ENCODE measurements at regions of chr16 and their contacts with region 1.

Region 1: DNA sequence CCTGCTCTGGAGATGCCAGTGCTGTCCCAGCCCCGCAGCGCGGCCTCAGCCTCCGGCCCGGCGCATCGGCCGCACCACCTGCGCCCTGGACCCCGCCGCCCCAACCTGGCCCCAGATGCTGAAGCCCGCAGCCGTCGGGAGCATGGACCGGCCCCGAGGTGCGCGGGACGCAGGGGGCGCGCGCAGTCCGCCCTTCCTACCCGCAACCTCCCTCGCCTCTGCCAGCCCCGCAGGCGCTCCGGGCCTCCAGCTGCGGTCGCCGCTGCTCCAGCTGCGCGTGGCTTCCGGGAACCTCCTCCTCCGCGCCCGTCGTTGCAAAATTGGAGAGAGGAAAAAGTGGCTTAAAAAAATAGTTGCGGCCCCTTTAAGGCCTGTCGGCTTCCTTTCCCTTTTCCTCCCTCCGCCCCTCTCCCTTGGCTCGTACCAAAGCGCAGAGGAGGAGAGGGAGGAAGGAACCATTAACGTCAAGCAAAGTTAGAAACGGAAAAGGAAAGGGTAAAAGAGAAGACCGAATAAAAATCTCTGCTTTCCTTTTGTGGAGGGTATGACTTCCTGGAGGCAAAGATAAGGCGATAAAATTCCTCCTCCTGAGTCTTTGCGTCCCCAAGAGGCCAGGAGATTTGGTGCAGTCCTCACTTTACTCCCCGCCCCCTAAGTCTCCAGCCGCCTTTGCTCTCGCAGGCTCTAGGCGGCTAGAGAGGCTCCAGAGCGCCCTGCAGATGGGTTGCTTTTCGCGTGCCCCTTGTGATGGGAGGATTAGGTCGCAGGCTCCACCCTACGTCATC is at the start of gene CDIPT:
- DNase-seq: peak; percentile 95 to 96 (median 95)
- H3K4me3 ChIP-seq: peak within 1 kb of the TSS; percentile 69 to 83
- H3K4me3 Mint-ChIP-seq: peak within 1 kb of the TSS; percentile 84 to 99 (median 96)
- H3K27ac ChIP-seq: peak within 1 kb of the TSS; percentile 89
- H3K27ac Mint-ChIP-seq: peak within 1 kb of the TSS; percentile 87 to 100 (median 98)
- H3K4me1 ChIP-seq: peaks cover 22% of the 10 kb centered on the region
- H3K4me1 Mint-ChIP-seq: peaks cover 4 to 34% (median 19%) of the 10 kb centered on the region in 4 donors
- H3K27me3 ChIP-seq: no peaks in the 10 kb centered on the region
- H3K27me3 Mint-ChIP-seq: no peaks in the 10 kb centered on the region
- total RNA-seq, gene CDIPT: 76.2 to 79.8 TPM

Region 2: DNA sequence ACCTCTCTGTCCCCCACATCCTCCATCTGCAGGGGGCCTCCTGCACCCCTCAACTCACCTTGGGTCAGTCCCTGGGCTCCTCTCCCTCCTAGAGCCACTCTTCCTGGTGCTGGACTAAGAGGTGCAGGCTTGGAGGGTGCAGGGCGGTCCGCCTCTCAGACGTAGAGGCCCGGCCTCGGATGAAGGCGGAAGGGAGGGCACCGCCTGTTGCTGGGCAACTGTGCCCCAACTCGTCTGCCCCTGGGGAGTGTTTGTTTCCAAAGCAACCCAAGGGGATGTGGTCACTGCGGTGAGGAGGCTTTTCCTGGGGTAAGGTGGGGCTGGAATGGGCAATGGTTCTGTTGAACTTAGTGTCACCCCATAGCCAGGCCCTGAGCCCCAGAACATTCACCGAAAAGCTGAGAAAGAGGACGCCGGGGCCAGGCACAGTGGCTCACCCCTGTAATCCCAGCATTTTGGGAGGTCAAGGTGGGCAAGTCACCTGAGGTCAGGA is 117.2 kb before region 1 on chr16 and contains the start of gene C16orf54:
- CTCF ChIA-PET with region 1: no interaction called
- POLR2A ChIA-PET with region 1: no interaction called
- intact Hi-C with region 1: no loop called
- DNase-seq: peak; percentile 98 to 99 (median 98)
- H3K4me3 ChIP-seq: peak within 1 kb of the TSS; percentile 67 to 93
- H3K4me3 Mint-ChIP-seq: peak within 1 kb of the TSS; percentile 96 to 100 (median 99)
- H3K27ac ChIP-seq: peak within 1 kb of the TSS; percentile 94
- H3K27ac Mint-ChIP-seq: peak within 1 kb of the TSS; percentile 98 to 100 (median 100)
- H3K4me1 ChIP-seq: peaks cover 78% of the 10 kb centered on the region
- H3K4me1 Mint-ChIP-seq: peaks cover 39 to 79% (median 54%) of the 10 kb centered on the region in 4 donors
- H3K27me3 ChIP-seq: no peaks in the 10 kb centered on the region
- H3K27me3 Mint-ChIP-seq: peaks cover 0 to 2% of the 10 kb centered on the region in 2 donors
- total RNA-seq, gene C16orf54: 139 to 143 TPM

Region 3: GRCh38 chr16:29815793-29816693 is 47.0 kb before region 1 on chr16 and contains the start of gene PAGR1:
- CTCF ChIA-PET with region 1: interaction called, 3 read pairs
- POLR2A ChIA-PET with region 1: interaction called, 18 read pairs
- intact Hi-C with region 1: loop called (anchors 1 kb)
- DNase-seq: peak; percentile 99 to 100 (median 99)
- H3K4me3 ChIP-seq: peak within 1 kb of the TSS; percentile 91 to 95
- H3K4me3 Mint-ChIP-seq: peak within 1 kb of the TSS; percentile 95 to 99 (median 98)
- H3K27ac ChIP-seq: peak within 1 kb of the TSS; percentile 77
- H3K27ac Mint-ChIP-seq: peak within 1 kb of the TSS; percentile 94 to 100 (median 98)
- H3K4me1 ChIP-seq: peaks cover 66% of the 10 kb centered on the region
- H3K4me1 Mint-ChIP-seq: peaks cover 30 to 87% (median 56%) of the 10 kb centered on the region in 4 donors
- H3K27me3 ChIP-seq: no peaks in the 10 kb centered on the region
- H3K27me3 Mint-ChIP-seq: peaks cover 0 to 2% of the 10 kb centered on the region in 2 donors
- total RNA-seq, gene PAGR1: 43.7 to 44.9 TPM

Region 4: DNA sequence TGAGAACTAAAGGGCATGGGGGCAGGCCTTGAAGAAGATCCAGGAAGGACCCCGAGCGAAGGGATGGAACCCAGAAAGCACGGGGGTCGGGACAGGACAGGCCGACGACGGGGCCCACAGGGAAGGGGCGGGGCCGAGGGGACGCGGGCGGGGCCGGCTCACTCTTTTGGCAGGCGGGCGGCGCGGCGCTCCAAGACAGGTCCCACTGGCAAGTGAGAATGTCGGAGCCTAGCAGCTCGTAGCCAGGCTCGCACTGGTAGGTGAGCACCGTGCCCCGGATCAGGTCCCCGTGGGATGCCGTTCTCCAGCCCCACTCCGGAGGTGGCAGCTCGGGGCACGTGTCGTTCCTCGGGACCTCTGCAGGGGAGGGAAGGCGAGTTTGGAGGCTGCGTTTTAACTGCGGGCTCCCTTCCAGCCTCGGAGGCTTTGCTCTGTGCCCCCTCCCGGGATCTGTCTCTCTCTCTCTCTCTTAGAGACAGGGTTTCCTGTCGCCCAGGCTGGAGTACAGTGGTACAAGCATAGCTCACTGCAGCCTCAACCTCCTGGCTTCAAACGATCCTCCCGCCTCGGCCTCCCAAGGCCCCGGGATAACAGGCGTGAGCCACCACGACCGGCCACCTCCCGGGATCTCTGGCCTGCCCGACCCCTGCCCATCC is 13.6 kb after region 1 on chr16:
- CTCF ChIA-PET with region 1: interaction called, 3 read pairs
- POLR2A ChIA-PET with region 1: interaction called, 3 read pairs
- intact Hi-C with region 1: loop called (anchors 1 kb)
- DNase-seq: peak in 2 of 5 donors; percentile 12 to 14
- H3K4me3 ChIP-seq: peak overlapping the region in 1 of 2 donors; percentile 38
- H3K4me3 Mint-ChIP-seq: peak overlapping the region; percentile 38 to 88 (median 80)
- H3K27ac ChIP-seq: no peak overlapping the region
- H3K27ac Mint-ChIP-seq: peak overlapping the region in 2 of 7 donors; percentile 35 to 68
- H3K4me1 ChIP-seq: peaks cover 14% of the 10 kb centered on the region
- H3K4me1 Mint-ChIP-seq: peaks cover 3 to 21% (median 14%) of the 10 kb centered on the region in 4 donors
- H3K27me3 ChIP-seq: peaks cover 8% of the 10 kb centered on the region
- H3K27me3 Mint-ChIP-seq: peaks cover 12 to 26% of the 10 kb centered on the region in 2 donors

Region 5: DNA sequence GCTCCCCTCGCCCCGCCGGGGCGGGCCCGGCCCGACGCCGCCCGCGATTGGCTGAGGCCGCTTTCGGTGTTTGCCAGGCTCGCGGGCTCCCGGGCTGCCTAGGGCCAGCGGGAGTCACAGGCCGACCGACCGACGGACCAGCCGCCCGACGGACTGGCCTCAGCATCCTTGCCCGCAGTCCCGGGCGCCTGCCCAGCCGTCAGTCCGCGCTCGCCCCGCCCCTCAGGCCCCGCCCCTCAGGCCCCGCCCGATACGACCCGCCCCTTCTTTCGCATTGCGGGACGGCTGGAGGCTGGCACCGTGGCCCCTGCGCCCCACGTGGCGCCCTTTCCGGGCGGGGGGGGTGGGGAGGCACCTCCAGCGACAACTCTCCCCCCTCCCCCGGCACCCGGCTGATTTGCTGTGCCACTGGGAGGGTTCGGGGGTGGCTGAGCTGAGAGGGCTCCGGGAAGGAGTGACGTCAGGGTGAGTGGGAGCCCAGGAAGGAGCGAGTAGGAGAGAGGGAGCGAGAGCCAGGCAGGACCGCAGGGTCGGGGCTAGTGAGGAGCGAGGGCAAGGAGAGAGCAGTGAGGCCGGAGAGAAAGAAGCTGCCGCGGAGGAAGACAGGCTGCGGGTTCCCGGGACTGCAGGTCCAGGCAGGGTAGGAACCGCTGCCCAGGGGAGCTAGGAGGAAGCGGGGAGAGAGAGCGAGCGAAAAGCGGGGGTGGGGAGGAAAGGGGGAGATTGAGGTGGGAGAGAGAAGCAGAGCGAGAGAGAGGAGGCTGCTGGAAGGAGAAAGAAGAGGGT is 37.2 kb after region 1 on chr16 and contains the start of gene ASPHD1:
- CTCF ChIA-PET with region 1: no interaction called
- POLR2A ChIA-PET with region 1: interaction called, 5 read pairs
- intact Hi-C with region 1: loop called (anchors 1 kb)
- DNase-seq: peak; percentile 74 to 88 (median 80)
- H3K4me3 ChIP-seq: peak within 1 kb of the TSS in 1 of 2 donors; percentile 45
- H3K4me3 Mint-ChIP-seq: peak within 1 kb of the TSS; percentile 47 to 83 (median 72)
- H3K27ac ChIP-seq: no peak within 1 kb of the TSS
- H3K27ac Mint-ChIP-seq: peak within 1 kb of the TSS in 3 of 7 donors; percentile 30 to 41 (median 30)
- H3K4me1 ChIP-seq: peaks cover 15% of the 10 kb centered on the region
- H3K4me1 Mint-ChIP-seq: peaks cover 0 to 5% (median 3%) of the 10 kb centered on the region in 4 donors
- H3K27me3 ChIP-seq: peaks cover 10% of the 10 kb centered on the region
- H3K27me3 Mint-ChIP-seq: peaks cover 18 to 24% of the 10 kb centered on the region in 2 donors
- total RNA-seq, gene ASPHD1: not detected

Region 6: GRCh38 chr16:29926005-29926710 is 63.1 kb after region 1 on chr16 and contains the start of gene KCTD13:
- CTCF ChIA-PET with region 1: no interaction called
- POLR2A ChIA-PET with region 1: interaction called, 6 read pairs
- intact Hi-C with region 1: loop called (anchors 5 kb)
- DNase-seq: peak; percentile 83 to 97 (median 90)
- H3K4me3 ChIP-seq: peak within 1 kb of the TSS; percentile 89 to 95
- H3K4me3 Mint-ChIP-seq: peak within 1 kb of the TSS; percentile 88 to 96 (median 94)
- H3K27ac ChIP-seq: peak within 1 kb of the TSS; percentile 77
- H3K27ac Mint-ChIP-seq: peak within 1 kb of the TSS; percentile 88 to 98 (median 97)
- H3K4me1 ChIP-seq: peaks cover 32% of the 10 kb centered on the region
- H3K4me1 Mint-ChIP-seq: peaks cover 22 to 53% (median 30%) of the 10 kb centered on the region in 4 donors
- H3K27me3 ChIP-seq: no peaks in the 10 kb centered on the region
- H3K27me3 Mint-ChIP-seq: no peaks in the 10 kb centered on the region
- total RNA-seq, gene KCTD13: 85.7 to 87.3 TPM

Region 7: GRCh38 chr16:29973384-29974246 is 110.5 kb after region 1 on chr16 and contains the start of gene TAOK2:
- CTCF ChIA-PET with region 1: interaction called, 4 read pairs
- POLR2A ChIA-PET with region 1: interaction called, 4 read pairs
- intact Hi-C with region 1: loop called (anchors 1 kb)
- DNase-seq: peak; percentile 92 to 94 (median 92)
- H3K4me3 ChIP-seq: peak within 1 kb of the TSS; percentile 74 to 87
- H3K4me3 Mint-ChIP-seq: peak within 1 kb of the TSS; percentile 82 to 97 (median 93)
- H3K27ac ChIP-seq: peak within 1 kb of the TSS; percentile 86
- H3K27ac Mint-ChIP-seq: peak within 1 kb of the TSS; percentile 77 to 97 (median 96)
- H3K4me1 ChIP-seq: peaks cover 36% of the 10 kb centered on the region
- H3K4me1 Mint-ChIP-seq: peaks cover 20 to 49% (median 34%) of the 10 kb centered on the region in 4 donors
- H3K27me3 ChIP-seq: no peaks in the 10 kb centered on the region
- H3K27me3 Mint-ChIP-seq: no peaks in the 10 kb centered on the region
- total RNA-seq, gene TAOK2: 53.8 to 56.0 TPM

Region 8: DNA sequence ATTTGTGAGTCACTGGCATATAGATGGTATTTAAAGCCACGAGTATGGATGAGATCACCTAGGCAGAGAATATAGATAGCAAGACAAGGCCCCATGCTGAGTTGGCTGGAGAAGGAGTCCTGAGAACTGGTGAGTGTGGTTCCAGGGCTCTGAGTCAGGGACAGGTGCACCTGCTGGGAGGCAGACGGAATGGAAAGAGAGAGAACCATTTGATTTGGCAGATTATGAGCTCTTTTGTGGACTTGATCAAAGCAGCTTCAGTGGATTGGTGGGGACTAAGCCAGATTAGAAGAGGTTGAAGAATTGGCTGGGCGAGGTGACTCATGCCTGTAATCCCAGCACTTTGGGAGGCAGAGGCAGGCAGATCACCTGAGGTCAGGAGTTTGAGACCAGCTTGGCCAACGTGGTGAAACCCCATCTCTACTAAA is 155.7 kb after region 1 on chr16:
- CTCF ChIA-PET with region 1: no interaction called
- POLR2A ChIA-PET with region 1: interaction called, 3 read pairs
- intact Hi-C with region 1: loop called (anchors 1 kb)
- DNase-seq: no peak
- H3K4me3 ChIP-seq: no peak overlapping the region
- H3K4me3 Mint-ChIP-seq: peak overlapping the region in 2 of 8 donors; percentile 1 to 56
- H3K27ac ChIP-seq: no peak overlapping the region
- H3K27ac Mint-ChIP-seq: peak overlapping the region in 1 of 7 donors; percentile 28
- H3K4me1 ChIP-seq: peaks cover 9% of the 10 kb centered on the region
- H3K4me1 Mint-ChIP-seq: peaks cover 4 to 13% (median 7%) of the 10 kb centered on the region in 4 donors
- H3K27me3 ChIP-seq: no peaks in the 10 kb centered on the region
- H3K27me3 Mint-ChIP-seq: no peaks in the 10 kb centered on the region

Region 9: GRCh38 chr16:30163538-30163937 is 300.5 kb after region 1 on chr16:
- CTCF ChIA-PET with region 1: no interaction called
- POLR2A ChIA-PET with region 1: no interaction called
- intact Hi-C with region 1: no loop called
- DNase-seq: no peak
- H3K4me3 ChIP-seq: no peak overlapping the region
- H3K4me3 Mint-ChIP-seq: peak overlapping the region in 1 of 8 donors; percentile 10
- H3K27ac ChIP-seq: no peak overlapping the region
- H3K27ac Mint-ChIP-seq: peak overlapping the region in 2 of 7 donors; percentile 11 to 66
- H3K4me1 ChIP-seq: peaks cover 11% of the 10 kb centered on the region
- H3K4me1 Mint-ChIP-seq: peaks cover 20 to 39% (median 29%) of the 10 kb centered on the region in 4 donors
- H3K27me3 ChIP-seq: no peaks in the 10 kb centered on the region
- H3K27me3 Mint-ChIP-seq: no peaks in the 10 kb centered on the region

Measured in CD4-positive, alpha-beta memory T cell (primary cell).